WTC11 (cell line): ENCODE measurements at regions of chr19 and their contacts with region 1.

Region 1: DNA sequence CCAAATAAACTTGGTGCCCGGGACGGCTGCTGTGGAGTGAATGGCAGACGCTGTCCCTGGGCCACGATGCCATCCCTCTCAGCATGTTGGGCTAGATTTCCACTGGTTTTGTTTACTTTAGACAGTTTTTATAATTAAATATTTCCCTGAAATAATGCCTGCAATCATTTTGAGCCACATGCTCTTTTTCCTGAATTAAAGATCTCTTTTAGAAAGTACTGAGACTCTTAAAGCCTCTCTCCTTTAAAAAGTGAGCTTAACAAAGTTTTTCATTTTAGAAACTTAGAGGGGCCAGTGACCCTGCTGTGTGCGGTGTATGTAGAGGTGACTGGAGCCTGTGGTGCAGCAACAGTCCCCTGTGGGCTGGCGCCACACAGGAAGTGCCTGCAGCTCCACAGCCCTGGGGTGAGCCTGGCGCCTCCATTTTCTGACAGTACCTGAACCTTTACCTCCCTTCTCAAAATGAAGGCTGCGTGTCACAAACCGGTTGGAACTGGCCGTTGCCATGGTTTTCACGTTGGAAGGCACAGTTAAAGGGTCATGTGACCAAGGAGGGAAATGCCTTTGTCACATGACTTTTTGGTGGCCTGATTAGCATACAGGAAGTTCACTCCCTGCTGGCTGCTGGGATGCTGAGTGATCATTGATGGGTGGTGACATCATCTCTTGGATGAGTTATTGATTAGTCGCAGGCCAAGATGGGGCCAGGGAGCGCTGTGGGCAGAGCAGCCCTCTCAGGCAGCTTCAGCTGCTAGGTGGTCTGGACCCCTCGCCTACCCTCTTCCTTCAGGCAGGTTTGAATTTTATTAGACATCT is 26.3 kb downstream of the TSSK6 start:
- DNase-seq: peak; percentile 90
- ATAC-seq: peak; percentile 45
- H3K4me3 Mint-ChIP-seq: peak overlapping the region; percentile 9; the same call in 1 of the 2 replicates
- H3K27ac Mint-ChIP-seq: peak overlapping the region; percentile 99
- H3K4me1 Mint-ChIP-seq: peaks cover 52% of the 10 kb centered on the region
- H3K27me3 Mint-ChIP-seq: no peaks in the 10 kb centered on the region
- CTCF ChIP-seq: no peak

Region 2: GRCh38 chr19:19342756-19343322 is 146.2 kb before region 1 on chr19:
- CTCF ChIA-PET with region 1: interaction called, 12 read pairs
- POLR2A ChIA-PET with region 1: no interaction called
- DNase-seq: peak; percentile 78
- ATAC-seq: peak; percentile 80
- H3K4me3 Mint-ChIP-seq: no peak overlapping the region
- H3K27ac Mint-ChIP-seq: no peak overlapping the region
- H3K4me1 Mint-ChIP-seq: no peaks in the 10 kb centered on the region
- H3K27me3 Mint-ChIP-seq: no peaks in the 10 kb centered on the region
- CTCF ChIP-seq: peak; percentile 78

Region 3: DNA sequence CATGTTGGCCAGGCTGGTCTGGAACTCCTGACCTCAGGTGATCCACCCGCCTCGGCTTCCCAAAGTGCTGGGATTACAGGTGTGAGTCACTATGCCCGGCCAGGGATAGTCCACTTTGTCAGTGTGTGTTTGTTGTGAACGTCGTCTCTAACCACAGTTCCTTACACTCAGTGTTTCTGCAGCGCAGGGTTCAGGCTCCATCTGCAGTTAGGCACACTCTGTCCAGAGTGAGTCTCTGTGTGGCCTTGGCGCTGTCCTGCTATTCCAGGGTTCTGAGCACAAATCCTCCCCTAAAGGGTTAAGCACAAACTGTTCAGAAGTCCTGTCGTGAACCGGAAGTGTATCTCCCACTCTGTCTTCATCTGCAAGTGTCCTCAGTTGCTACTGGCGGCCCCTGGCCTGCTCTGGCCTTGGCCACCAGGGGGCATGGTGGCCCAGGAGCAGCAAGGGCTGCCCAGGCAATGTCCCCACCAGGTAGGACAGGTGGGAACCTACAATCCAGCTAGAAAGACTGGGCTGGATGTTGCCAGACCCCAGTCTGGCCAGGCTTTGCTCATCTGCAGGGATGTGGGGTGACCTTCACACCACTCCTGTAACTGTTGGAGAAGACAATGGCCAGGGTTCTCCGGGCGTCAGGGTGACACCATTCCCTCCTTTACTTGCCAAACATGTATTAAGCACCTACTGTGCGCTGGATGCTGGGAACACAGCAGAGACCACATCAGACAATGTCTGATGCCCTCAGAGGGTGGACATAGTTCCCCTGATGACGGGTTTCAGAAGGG is 122.3 kb before region 1 on chr19:
- CTCF ChIA-PET with region 1: interaction called, 84 read pairs
- POLR2A ChIA-PET with region 1: no interaction called
- DNase-seq: peak; percentile 85
- ATAC-seq: peak; percentile 97
- H3K4me3 Mint-ChIP-seq: peak overlapping the region; percentile 8; the same call in 1 of the 2 replicates
- H3K27ac Mint-ChIP-seq: peak overlapping the region; percentile 71
- H3K4me1 Mint-ChIP-seq: peaks cover 15% of the 10 kb centered on the region
- H3K27me3 Mint-ChIP-seq: no peaks in the 10 kb centered on the region
- CTCF ChIP-seq: peak; percentile 83

Region 4: GRCh38 chr19:19385108-19385899 is 103.8 kb before region 1 on chr19:
- CTCF ChIA-PET with region 1: interaction called, 13 read pairs
- POLR2A ChIA-PET with region 1: interaction called, 4 read pairs
- DNase-seq: peak; percentile 100
- ATAC-seq: peak; percentile 97
- H3K4me3 Mint-ChIP-seq: peak overlapping the region; percentile 70
- H3K27ac Mint-ChIP-seq: peak overlapping the region; percentile 84
- H3K4me1 Mint-ChIP-seq: peaks cover 37% of the 10 kb centered on the region
- H3K27me3 Mint-ChIP-seq: peaks cover 9% of the 10 kb centered on the region
- CTCF ChIP-seq: no peak

Region 5: DNA sequence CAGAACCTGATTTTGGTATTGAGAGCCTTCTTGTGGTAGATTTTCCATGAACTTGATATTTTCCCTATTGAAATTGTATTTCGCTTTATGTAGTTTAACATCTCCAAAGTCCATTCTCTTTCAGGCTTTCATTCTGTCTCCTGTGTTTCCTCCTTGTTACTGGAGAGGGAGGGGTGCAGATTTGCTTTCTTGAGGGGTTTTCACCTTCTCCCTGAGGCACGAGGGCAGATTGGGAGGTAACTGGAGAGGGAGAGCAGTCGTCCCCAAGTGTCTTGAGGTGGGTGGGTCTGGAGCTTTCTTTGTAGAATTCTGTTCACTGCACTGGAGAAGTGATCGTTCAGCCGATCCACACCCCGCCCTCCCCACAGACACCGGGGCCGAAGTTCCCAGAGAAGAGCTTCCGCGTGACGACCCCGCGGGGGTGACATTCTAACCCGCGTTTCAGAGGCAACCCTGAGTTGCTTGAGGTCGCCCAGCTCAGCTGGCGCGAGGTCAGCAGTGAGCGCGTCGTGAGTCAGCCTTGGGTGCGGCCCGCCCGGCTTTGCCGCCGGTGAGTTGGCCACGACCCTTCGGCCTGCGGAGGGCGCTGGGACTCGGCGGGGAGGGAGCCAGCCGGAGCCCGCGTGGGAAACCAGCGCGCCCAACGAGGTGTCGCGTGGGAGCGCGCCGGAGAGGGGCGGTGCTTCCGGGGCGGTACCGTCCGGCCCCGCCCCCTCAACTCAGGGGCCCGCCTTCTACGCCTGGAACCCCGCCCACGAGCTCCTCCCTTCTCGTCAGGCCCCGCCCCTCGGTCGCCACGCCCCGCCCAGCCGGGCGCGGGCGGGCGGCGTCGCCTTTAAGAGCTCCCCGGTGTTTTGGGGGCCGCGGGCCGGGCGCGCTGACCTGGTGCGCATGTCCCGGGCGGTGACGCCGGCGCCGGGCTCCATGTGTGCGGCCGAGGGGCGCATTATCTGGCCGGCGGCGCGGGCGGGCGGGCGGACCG is 83.9 kb before region 1 on chr19 and contains the start of gene GATAD2A:
- CTCF ChIA-PET with region 1: interaction called, 16 read pairs
- POLR2A ChIA-PET with region 1: interaction called, 8 read pairs
- DNase-seq: peak; percentile 90
- ATAC-seq: peak; percentile 81
- H3K4me3 Mint-ChIP-seq: peak within 1 kb of the TSS; percentile 96
- H3K27ac Mint-ChIP-seq: peak within 1 kb of the TSS; percentile 96
- H3K4me1 Mint-ChIP-seq: peaks cover 48% of the 10 kb centered on the region
- H3K27me3 Mint-ChIP-seq: peaks cover 7% of the 10 kb centered on the region; the same call in 1 of the 2 replicates
- CTCF ChIP-seq: no peak
- total RNA-seq, gene GATAD2A: 186 to 209 TPM (median 189 TPM) in 3 replicates

Region 6: GRCh38 chr19:19410275-19411192 is 78.5 kb before region 1 on chr19:
- CTCF ChIA-PET with region 1: interaction called, 16 read pairs
- POLR2A ChIA-PET with region 1: interaction called, 8 read pairs
- DNase-seq: no peak
- ATAC-seq: no peak
- H3K4me3 Mint-ChIP-seq: no peak overlapping the region
- H3K27ac Mint-ChIP-seq: peak overlapping the region; percentile 83
- H3K4me1 Mint-ChIP-seq: peaks cover 52% of the 10 kb centered on the region
- H3K27me3 Mint-ChIP-seq: no peaks in the 10 kb centered on the region
- CTCF ChIP-seq: no peak

Region 7: DNA sequence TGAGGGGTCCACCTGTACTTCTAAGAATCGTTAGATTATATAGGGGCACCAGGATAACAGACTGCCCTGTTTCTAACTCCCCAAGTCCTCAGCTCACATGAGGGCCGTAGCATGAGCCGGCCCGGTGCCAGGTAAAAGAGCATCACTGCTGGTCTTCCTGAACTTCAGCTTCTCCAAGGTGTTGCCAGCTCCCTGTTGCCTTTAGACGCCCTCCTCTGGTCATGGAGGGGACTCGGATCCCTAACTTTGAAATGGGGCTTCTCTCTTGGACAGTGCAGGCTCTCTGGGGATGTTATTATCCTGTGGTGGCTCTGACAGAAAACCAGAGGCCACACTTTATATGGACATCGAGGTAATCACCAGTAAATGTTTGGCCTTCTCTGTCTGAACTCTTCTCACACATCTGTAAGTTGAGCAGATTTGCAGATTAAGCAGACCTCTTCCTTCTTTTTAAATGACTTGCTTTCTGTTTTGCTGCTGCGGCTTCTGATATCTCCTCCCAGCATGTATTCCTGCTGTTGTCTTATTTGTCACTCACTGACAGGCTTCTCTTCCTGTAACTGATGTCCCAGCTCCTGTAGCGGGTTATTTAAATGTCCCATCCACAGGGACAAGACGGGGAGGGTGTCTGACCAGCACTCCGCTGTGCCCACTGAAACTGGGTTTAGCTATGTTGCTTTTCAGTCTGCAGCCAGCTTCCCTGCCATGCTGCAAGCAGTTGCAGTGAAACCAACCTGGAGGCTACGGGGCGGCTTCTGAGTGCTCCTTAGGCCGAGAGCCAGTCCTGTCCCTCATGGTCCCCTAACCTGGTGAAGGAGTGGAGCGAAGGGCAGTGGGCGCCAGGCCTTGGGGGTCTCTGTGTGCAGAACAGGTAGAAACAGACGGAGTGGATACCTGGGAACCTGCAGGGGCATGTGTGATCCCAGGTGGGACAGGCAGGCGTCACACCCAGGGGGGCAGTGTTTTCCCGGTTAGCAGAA is 12.9 kb before region 1 on chr19:
- CTCF ChIA-PET with region 1: interaction called, 23 read pairs
- POLR2A ChIA-PET with region 1: interaction called, 5 read pairs
- DNase-seq: peak; percentile 53
- ATAC-seq: peak; percentile 52
- H3K4me3 Mint-ChIP-seq: peak overlapping the region; percentile 56
- H3K27ac Mint-ChIP-seq: peak overlapping the region; percentile 91
- H3K4me1 Mint-ChIP-seq: peaks cover 60% of the 10 kb centered on the region
- H3K27me3 Mint-ChIP-seq: no peaks in the 10 kb centered on the region
- CTCF ChIP-seq: no peak

Region 8: GRCh38 chr19:19597809-19598306 is 108.8 kb after region 1 on chr19:
- CTCF ChIA-PET with region 1: no interaction called
- POLR2A ChIA-PET with region 1: no interaction called
- DNase-seq: no peak
- ATAC-seq: no peak
- H3K4me3 Mint-ChIP-seq: no peak overlapping the region
- H3K27ac Mint-ChIP-seq: no peak overlapping the region
- H3K4me1 Mint-ChIP-seq: peaks cover 22% of the 10 kb centered on the region
- H3K27me3 Mint-ChIP-seq: no peaks in the 10 kb centered on the region
- CTCF ChIP-seq: no peak